HEK293T (cell line): ENCODE measurements at regions of chr19 and their contacts with region 1.

Region 1: DNA sequence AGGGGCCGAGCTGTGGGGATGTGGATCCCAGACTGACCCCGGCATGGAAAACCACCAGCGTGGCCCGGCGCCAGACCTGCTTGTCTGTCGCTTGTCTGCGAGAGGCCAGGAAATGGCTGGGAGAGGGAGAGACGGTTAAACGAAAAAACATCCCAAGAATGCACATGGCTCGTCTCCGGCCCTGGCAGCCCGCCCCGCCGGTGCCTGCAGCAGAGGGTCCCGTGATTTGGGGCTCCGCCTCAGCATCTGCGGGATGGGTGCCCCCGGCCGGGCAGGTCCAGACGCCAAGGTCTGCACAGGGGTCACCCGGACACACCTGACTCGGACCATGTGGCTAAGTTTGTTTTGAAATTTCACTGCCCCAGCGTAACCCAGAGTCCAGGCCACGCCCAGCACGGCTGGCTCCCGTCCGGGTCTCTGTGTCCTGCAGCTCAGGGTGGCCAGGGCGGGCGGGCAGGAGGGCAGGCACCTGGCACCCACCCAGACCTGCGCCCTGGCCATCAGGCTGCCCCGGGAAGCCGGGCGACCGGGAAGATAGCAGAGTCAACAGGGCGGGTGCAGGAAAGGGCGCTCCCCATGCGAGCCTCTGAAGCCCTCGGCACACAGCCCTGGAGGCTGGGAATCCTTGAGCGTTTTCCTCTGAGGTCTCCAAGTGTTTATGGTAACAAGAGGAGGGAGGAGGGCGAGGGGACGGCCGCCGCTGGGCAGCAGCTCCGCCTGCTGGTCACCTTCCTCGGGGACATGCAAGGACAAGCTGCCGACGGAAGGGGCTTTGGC is 103.2 kb downstream of the GADD45B start:
- DNase-seq: peak; percentile 80

Region 2: GRCh38 chr19:2517868-2518625 is 61.0 kb before region 1 on chr19:
- CTCF ChIA-PET with region 1: no interaction called
- POLR2A ChIA-PET with region 1: no interaction called
- DNase-seq: no peak

Region 3: GRCh38 chr19:2610637-2611482 is 31.8 kb after region 1 on chr19:
- CTCF ChIA-PET with region 1: interaction called, 11 read pairs
- POLR2A ChIA-PET with region 1: no interaction called
- DNase-seq: peak; percentile 81